ENCODE measurements at regions of chr20 and their contacts with region 1.

Region 1: DNA sequence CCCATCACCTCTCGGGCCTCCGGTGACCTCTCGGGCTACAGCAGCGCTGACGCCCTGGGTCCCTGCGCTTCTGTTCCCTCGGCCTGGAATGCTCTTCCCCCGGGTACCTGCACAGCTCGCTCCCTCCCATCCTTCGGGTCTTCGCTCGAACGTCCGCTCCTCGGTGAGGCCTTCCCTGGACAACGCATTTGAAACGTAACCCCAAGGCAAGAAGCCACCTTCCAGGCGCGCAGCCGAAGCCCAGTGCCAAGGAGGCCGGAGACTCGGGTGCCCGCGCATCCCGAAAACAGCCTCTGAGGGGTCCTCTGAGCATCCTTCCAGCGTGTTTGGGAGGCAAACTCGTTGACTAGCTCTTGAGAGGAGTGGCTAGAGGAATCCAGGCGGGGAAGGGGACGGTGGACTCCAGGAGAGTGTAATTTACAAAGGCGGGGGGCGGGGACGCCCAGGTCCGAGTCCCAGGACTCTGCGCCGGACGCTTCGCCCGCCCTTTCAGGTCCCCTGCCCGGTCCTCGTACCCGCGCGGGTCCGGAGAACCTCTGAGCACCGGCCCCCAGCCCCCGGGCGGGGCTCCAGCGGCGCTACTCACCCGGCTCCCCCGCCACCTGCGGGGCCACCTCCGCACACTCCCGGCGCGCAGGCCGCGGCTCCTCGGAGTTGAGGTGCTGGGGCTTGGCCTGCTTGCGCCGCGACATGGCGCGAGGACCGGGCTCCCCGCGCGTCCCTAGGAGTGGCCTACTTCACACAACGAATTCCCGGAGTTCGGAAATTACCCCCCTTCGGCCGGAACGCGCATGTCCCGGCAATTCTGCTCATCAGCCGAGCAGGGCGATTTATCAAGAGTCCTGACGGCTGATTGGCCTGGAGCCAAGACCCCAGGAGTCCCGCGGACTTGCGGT is 86.8 kb downstream of the ZFP64 start:
- DNase-seq: peak; percentile 9
- H3K4me3 Mint-ChIP-seq: peak overlapping the region; percentile 57
- H3K27ac Mint-ChIP-seq: no peak overlapping the region
- H3K4me1 Mint-ChIP-seq: peaks cover 16% of the 10 kb centered on the region
- H3K27me3 Mint-ChIP-seq: peaks cover 35% of the 10 kb centered on the region

Region 2: DNA sequence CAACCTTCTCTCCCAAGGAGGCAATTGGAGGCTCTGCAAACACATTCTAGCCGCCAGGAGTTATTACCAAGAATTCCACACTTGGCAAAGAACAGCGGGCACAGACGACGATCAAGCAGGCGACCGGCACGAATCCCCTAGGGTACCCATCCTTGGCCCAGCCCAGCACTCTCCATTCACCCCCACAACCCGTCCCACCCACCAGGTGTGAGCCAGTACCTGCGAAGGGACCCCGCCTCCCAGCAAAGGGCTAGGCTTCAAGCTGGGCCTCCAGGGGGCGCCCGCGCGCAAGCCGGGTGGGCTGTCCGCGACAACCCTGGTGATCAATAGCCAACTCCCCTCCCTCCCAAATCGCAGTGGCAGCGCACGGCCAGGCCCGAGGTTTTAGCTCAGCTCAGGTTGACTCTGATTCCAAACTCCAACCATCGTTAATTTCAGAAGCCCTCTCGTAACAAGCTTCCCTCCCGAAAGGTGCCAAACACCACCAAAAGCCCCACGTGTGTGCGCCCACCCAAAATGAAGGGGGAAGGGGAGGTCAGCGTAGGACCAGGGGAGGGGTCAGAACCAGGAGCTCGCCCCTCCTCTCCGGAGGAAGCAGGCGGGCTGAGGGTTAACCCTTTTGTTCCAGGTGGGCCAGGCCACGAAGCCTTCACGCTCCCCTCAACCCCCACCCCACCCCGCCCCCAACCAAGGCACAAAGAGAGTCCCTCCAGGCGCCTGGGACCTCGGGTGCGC is 304.6 kb before region 1 on chr20:
- CTCF ChIA-PET with region 1: interaction called, 5 read pairs
- POLR2A ChIA-PET with region 1: no interaction called
- intact Hi-C with region 1: loop called (anchors 10 kb)
- DNase-seq: peak; percentile 76
- H3K4me3 Mint-ChIP-seq: peak overlapping the region; percentile 20
- H3K27ac Mint-ChIP-seq: no peak overlapping the region
- H3K4me1 Mint-ChIP-seq: peaks cover 9% of the 10 kb centered on the region
- H3K27me3 Mint-ChIP-seq: peaks cover 62% of the 10 kb centered on the region

Measured in activated CD4-positive, alpha-beta memory T cell treated with anti-CD3 and anti-CD28 coated beads for 36 hours (primary cell).